ENCODE measurements at regions of chr3 and their contacts with region 1.

Region 1: DNA sequence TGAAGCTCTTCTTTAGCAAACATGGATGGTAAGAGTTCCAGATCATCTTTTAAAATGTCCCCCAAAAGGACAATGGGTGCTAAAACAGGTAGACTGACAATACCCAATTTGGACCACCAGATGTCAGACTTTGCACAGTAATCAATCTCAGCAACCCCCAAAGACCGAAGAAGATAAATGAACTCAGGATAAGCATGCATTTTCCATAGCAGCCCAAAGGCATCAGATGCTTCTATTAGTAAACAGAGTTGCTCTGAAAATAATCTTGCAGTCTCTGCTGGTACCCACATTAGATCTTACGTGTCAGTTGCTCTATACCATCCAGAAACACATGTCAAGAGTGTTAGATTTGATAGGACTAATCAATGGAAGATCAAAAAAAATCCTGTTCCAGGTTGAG is 20.6 kb downstream of the MYH15 start:
- DNase-seq: peak; percentile 59
- H3K4me3 Mint-ChIP-seq: no peak overlapping the region
- H3K27ac Mint-ChIP-seq: no peak overlapping the region
- H3K4me1 Mint-ChIP-seq: no peaks in the 10 kb centered on the region
- H3K27me3 Mint-ChIP-seq: no peaks in the 10 kb centered on the region
- CTCF ChIP-seq: peak; percentile 75

Region 2: GRCh38 chr3:108301695-108302404 is 187.9 kb before region 1 on chr3:
- CTCF ChIA-PET with region 1: no interaction called
- POLR2A ChIA-PET with region 1: no interaction called
- intact Hi-C with region 1: no loop called
- DNase-seq: no peak
- H3K4me3 Mint-ChIP-seq: no peak overlapping the region
- H3K27ac Mint-ChIP-seq: no peak overlapping the region
- H3K4me1 Mint-ChIP-seq: no peaks in the 10 kb centered on the region
- H3K27me3 Mint-ChIP-seq: no peaks in the 10 kb centered on the region
- CTCF ChIP-seq: no peak

Region 3: DNA sequence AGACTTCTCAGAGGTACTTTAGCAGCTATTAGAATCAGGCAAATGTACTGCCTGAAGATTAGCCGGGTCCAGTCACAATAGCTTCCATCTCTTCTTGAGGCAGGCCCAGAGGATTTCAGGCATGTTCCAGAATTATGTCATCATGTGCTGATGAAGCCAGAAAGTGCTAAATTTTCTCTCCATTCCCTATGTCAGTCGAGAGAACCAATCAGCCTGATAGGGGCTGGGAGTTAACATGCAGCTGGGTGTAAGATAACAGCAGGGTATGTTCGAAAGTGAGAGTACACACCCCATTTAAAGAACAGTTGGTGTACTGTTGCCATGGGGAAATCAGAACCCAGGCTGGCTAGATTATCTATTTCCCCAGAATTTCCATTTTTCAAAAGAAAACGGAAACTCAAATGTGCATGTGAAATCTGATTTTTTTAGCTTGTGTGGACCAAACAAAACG is 28.1 kb before region 1 on chr3:
- CTCF ChIA-PET with region 1: interaction called, 11 read pairs
- POLR2A ChIA-PET with region 1: interaction called, 4 read pairs
- intact Hi-C with region 1: no loop called
- DNase-seq: no peak
- H3K4me3 Mint-ChIP-seq: no peak overlapping the region
- H3K27ac Mint-ChIP-seq: no peak overlapping the region
- H3K4me1 Mint-ChIP-seq: no peaks in the 10 kb centered on the region
- H3K27me3 Mint-ChIP-seq: no peaks in the 10 kb centered on the region
- CTCF ChIP-seq: no peak

Region 4: GRCh38 chr3:108477511-108478147 is 12.1 kb before region 1 on chr3:
- CTCF ChIA-PET with region 1: interaction called, 34 read pairs
- POLR2A ChIA-PET with region 1: interaction called, 4 read pairs
- intact Hi-C with region 1: no loop called
- DNase-seq: peak; percentile 77
- H3K4me3 Mint-ChIP-seq: no peak overlapping the region
- H3K27ac Mint-ChIP-seq: no peak overlapping the region
- H3K4me1 Mint-ChIP-seq: no peaks in the 10 kb centered on the region
- H3K27me3 Mint-ChIP-seq: no peaks in the 10 kb centered on the region
- CTCF ChIP-seq: peak; percentile 62

Region 5: GRCh38 chr3:108546247-108546646 is 56.5 kb after region 1 on chr3:
- CTCF ChIA-PET with region 1: interaction called, 321 read pairs
- POLR2A ChIA-PET with region 1: interaction called, 4 read pairs
- intact Hi-C with region 1: no loop called
- DNase-seq: no peak
- H3K4me3 Mint-ChIP-seq: no peak overlapping the region
- H3K27ac Mint-ChIP-seq: peak overlapping the region; percentile 49
- H3K4me1 Mint-ChIP-seq: no peaks in the 10 kb centered on the region
- H3K27me3 Mint-ChIP-seq: no peaks in the 10 kb centered on the region
- CTCF ChIP-seq: no peak

Region 6: GRCh38 chr3:108552267-108553159 is 62.7 kb after region 1 on chr3:
- CTCF ChIA-PET with region 1: interaction called, 321 read pairs
- POLR2A ChIA-PET with region 1: interaction called, 4 read pairs
- intact Hi-C with region 1: loop called (anchors 1 kb)
- DNase-seq: peak; percentile 61
- H3K4me3 Mint-ChIP-seq: no peak overlapping the region
- H3K27ac Mint-ChIP-seq: peak overlapping the region; percentile 28
- H3K4me1 Mint-ChIP-seq: peaks cover 7% of the 10 kb centered on the region
- H3K27me3 Mint-ChIP-seq: no peaks in the 10 kb centered on the region
- CTCF ChIP-seq: peak; percentile 40

Region 7: GRCh38 chr3:109081746-109082510 is 592.2 kb after region 1 on chr3:
- CTCF ChIA-PET with region 1: interaction called, 10 read pairs
- POLR2A ChIA-PET with region 1: no interaction called
- intact Hi-C with region 1: loop called (anchors 5 kb)
- DNase-seq: peak; percentile 71
- H3K4me3 Mint-ChIP-seq: no peak overlapping the region
- H3K27ac Mint-ChIP-seq: peak overlapping the region; percentile 55
- H3K4me1 Mint-ChIP-seq: peaks cover 6% of the 10 kb centered on the region
- H3K27me3 Mint-ChIP-seq: no peaks in the 10 kb centered on the region
- CTCF ChIP-seq: peak; percentile 75

Measured in MCF 10A (cell line).